Gastrocnemius medialis (tissue), 4 donors: ENCODE measurements at regions of chr5 and their contacts with region 1.

Region 1: DNA sequence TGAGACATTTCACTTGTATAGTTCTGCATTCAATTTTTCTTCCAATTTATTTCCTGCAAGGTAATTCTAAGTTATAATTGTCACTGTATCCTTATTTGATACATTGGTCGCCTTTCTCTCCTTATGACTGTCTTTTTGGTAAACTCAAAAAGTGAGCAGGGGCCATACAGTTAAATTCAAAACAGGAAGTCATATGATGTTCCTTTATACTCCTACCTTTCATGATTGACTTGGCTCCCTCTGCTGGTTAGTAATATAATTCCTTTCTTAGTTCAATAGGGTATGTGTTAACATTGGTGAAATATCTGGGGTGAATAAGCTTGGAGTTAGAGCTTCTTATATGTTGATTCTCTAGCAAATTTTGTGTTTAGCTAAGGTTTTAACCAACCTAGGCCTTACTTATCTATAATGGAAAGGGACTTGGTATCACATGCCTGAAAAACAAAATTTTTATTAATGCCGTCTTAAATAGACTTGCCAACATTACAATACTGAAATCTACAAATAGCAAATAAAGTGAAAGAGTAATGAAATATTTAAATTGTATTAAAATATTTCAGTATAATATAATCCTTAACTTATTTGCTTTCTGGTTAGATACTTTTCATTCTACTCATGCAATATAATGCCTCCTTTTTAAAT is 6.0 kb upstream of the NIPBL start:
- DNase-seq: no peak
- ATAC-seq: peak; percentile 77 to 81
- H3K4me3 ChIP-seq: no peak overlapping the region
- H3K27ac ChIP-seq: no peak overlapping the region
- H3K4me1 ChIP-seq: peaks cover 20 to 30% of the 10 kb centered on the region in 2 donors
- H3K27me3 ChIP-seq: no peaks in the 10 kb centered on the region
- CTCF ChIP-seq: peak; percentile 36 to 68 (median 58)
- POLR2A ChIP-seq: no peak

Region 2: DNA sequence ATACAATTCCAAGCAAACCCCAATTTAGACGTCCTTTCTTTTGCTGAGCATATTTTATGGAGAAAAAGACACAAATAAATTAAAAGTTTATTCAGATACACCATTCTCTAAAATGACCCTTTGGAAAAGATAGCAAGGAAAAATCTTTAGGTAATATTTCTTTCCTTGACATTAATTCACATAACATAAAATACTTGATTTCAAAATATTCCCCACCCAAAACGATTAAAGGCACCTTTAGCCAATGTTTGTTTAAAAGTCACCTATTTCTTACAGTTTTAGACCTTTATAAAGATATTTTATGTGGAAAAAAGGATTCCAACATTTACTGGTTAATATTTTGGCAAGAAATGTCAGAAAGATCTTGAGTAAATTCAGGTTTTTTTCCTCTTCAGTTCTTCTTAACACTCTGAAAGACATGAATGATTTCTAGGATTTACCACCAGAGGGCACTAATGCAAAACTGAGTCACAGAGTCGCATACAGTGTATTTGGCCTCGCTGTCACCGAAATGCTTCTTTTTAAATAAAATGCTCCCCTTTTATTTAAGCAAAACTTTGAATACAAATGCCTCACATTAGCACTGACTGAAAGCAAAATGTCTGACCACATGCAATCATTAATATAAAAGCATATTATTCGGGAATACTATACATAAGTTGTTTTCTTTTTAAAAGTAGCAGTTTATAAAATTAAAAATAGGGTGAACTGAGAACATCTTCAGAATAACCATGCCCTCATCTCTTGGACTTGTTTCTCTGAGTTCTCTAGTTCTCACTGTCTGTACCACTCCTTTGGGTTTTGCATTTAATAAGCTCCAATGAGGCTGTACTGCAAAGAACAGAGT is 141.6 kb before region 1 on chr5:
- in situ Hi-C with region 1: loop called in 1 of 4 experiments (anchors 25 kb)
- intact Hi-C with region 1: loop called (anchors 5 kb)
- DNase-seq: no peak
- ATAC-seq: peak in 1 of 2 donors; percentile 62
- H3K4me3 ChIP-seq: no peak overlapping the region
- H3K27ac ChIP-seq: no peak overlapping the region
- H3K4me1 ChIP-seq: peaks cover 0 to 6% of the 10 kb centered on the region in 2 donors
- H3K27me3 ChIP-seq: no peaks in the 10 kb centered on the region
- CTCF ChIP-seq: peak; percentile 33 to 73 (median 46)
- POLR2A ChIP-seq: no peak

Region 3: DNA sequence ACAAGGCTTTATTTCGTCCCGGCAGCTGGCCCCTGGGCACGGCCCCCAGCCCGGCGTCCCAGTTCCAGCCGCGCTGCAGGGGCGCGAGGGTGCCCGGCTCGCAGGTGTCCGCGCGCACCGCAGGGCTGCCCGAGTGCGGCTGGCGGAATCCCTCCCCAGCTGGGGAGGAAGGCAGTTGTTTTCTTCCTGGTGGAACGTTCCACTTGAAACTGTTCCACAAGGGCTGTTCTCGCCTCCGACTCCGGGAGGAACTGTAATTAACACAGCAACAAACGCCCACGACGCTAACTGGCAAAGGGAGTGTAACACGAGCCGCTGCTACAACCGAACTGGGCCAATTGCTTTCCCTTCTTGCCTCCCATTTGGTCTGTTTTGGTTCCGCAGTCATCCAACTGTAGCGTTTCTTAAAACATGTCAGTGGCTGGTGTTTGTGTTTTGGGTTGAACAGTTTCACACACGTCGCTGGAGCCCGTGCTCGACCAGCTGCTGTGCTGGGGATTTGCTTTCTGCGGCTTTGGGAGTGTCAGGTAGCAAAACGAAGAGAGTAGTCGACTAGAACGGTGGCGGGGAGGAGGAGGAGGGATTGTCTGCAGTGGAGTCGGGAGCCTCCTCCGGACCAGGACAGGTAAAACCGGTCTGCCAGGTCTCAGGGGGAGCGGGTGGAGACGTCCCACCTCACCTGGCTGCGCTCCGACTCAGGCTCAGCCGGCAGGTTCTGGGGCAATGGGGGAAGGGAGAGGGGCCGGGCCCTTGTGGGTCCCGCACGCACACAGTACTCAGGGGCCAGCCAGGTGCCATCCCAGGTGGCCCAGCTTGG is 125.5 kb before region 1 on chr5:
- in situ Hi-C with region 1: loop called (anchors 5 to 25 kb)
- intact Hi-C with region 1: loop called (anchors 2 kb)
- DNase-seq: peak; percentile 8 to 16
- ATAC-seq: peak; percentile 79 to 84
- H3K4me3 ChIP-seq: peak overlapping the region; percentile 57 to 68 (median 66)
- H3K27ac ChIP-seq: peak overlapping the region; percentile 55 to 74 (median 66)
- H3K4me1 ChIP-seq: peaks cover 8 to 16% of the 10 kb centered on the region in 2 donors
- H3K27me3 ChIP-seq: no peaks in the 10 kb centered on the region
- CTCF ChIP-seq: peak in 2 of 5 experiments; percentile 14 to 53
- POLR2A ChIP-seq: no peak